CD4-positive, alpha-beta memory T cell (primary cell): ENCODE measurements at regions of chr15 and their contacts with region 1.

Region 1: DNA sequence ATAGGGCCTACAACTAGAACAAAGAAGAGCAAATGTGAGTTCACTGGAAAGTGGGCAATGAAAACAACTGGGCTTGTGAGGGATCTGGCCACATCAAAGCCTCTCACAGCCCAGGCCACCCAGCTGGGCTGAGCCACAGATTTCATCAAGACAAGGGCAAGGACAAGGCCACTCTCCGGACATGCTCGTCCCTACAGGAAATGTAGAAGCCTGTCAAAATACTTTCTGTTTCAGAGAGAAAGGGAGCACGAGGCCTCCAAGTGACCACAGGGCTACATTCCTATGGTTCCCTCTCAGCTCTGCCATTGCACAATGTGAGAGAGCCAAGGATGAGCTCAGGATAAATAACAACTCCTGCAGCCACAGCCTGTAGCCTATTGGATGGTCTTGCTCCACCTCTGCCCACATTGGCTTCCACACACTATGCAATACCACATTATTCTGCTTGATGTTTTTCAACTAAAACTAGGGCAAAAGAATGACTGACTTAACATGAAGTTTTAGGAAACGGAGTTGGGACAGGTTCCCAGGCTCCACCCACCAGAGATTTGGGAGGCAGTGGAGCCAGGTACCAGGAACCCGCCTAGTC is 12.1 kb downstream of the TBC1D2B start:
- DNase-seq: peak in 3 of 5 donors; percentile 24 to 60 (median 30)
- H3K4me3 ChIP-seq: peak overlapping the region; percentile 19 to 23
- H3K4me3 Mint-ChIP-seq: peak overlapping the region in 1 of 8 donors; percentile 79
- H3K27ac ChIP-seq: peak overlapping the region; percentile 72
- H3K27ac Mint-ChIP-seq: no peak overlapping the region
- H3K4me1 ChIP-seq: peaks cover 98% of the 10 kb centered on the region
- H3K4me1 Mint-ChIP-seq: peaks cover 3 to 67% (median 25%) of the 10 kb centered on the region in 4 donors
- H3K27me3 ChIP-seq: no peaks in the 10 kb centered on the region
- H3K27me3 Mint-ChIP-seq: no peaks in the 10 kb centered on the region

Region 2: GRCh38 chr15:78044407-78045155 is 20.8 kb before region 1 on chr15:
- CTCF ChIA-PET with region 1: interaction called, 78 read pairs
- POLR2A ChIA-PET with region 1: interaction called, 984 read pairs
- intact Hi-C with region 1: no loop called
- DNase-seq: peak in 3 of 5 donors; percentile 38 to 67 (median 50)
- H3K4me3 ChIP-seq: no peak overlapping the region
- H3K4me3 Mint-ChIP-seq: peak overlapping the region in 7 of 8 donors; percentile 57 to 90 (median 75)
- H3K27ac ChIP-seq: peak overlapping the region; percentile 42
- H3K27ac Mint-ChIP-seq: peak overlapping the region; percentile 86 to 98 (median 95)
- H3K4me1 ChIP-seq: peaks cover 100% of the 10 kb centered on the region
- H3K4me1 Mint-ChIP-seq: peaks cover 66 to 99% (median 88%) of the 10 kb centered on the region in 4 donors
- H3K27me3 ChIP-seq: no peaks in the 10 kb centered on the region
- H3K27me3 Mint-ChIP-seq: no peaks in the 10 kb centered on the region

Region 3: DNA sequence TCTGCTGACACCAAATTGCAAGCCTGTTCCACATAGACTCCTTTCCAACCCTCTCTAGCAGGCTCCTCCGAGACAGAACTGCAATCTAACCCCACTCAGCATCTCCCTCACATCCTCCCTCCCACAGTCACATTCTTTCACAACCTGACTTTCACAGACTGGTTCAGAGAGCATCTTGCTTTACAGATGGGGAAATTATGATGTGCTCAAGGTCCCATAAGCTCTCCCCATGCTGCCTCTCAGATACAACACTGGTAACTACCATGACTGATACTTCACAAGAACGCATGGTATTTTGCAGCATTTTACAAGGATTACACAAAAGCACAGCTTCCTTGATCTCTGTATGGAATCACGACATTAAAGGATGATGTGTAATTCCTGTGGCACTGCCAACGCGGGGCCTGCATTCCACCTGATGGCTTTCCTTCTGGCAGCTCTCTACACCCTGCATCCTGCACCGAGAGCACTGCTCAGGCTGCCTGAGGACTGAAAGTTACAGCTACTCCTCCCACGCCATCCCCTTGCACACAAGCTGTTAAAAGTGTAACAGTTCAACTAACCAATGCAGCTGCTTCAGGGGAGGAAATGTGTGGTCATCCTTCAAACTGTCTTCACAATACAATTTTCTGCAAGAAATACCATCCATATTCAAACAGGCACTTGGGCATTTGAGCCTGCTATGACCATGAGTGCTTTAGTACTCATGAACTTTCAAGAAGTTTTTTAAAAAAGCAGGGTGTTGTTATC is 15.5 kb before region 1 on chr15:
- CTCF ChIA-PET with region 1: interaction called, 78 read pairs
- POLR2A ChIA-PET with region 1: interaction called, 984 read pairs
- intact Hi-C with region 1: loop called (anchors 2 kb)
- DNase-seq: peak; percentile 54 to 72 (median 62)
- H3K4me3 ChIP-seq: peak overlapping the region in 1 of 2 donors; percentile 35
- H3K4me3 Mint-ChIP-seq: peak overlapping the region; percentile 63 to 86 (median 74)
- H3K27ac ChIP-seq: peak overlapping the region; percentile 68
- H3K27ac Mint-ChIP-seq: peak overlapping the region; percentile 86 to 98 (median 92)
- H3K4me1 ChIP-seq: peaks cover 100% of the 10 kb centered on the region
- H3K4me1 Mint-ChIP-seq: peaks cover 79 to 100% (median 92%) of the 10 kb centered on the region in 4 donors
- H3K27me3 ChIP-seq: no peaks in the 10 kb centered on the region
- H3K27me3 Mint-ChIP-seq: no peaks in the 10 kb centered on the region

Region 4: GRCh38 chr15:78077058-78077877 is 11.9 kb after region 1 on chr15 and contains the start of gene TBC1D2B:
- CTCF ChIA-PET with region 1: interaction called, 15 read pairs
- POLR2A ChIA-PET with region 1: interaction called, 984 read pairs
- intact Hi-C with region 1: loop called (anchors 1 kb)
- DNase-seq: peak; percentile 65 to 71 (median 68)
- H3K4me3 ChIP-seq: peak within 1 kb of the TSS; percentile 59 to 89
- H3K4me3 Mint-ChIP-seq: peak within 1 kb of the TSS; percentile 93 to 100 (median 99)
- H3K27ac ChIP-seq: peak within 1 kb of the TSS; percentile 83
- H3K27ac Mint-ChIP-seq: peak within 1 kb of the TSS; percentile 89 to 99 (median 97)
- H3K4me1 ChIP-seq: peaks cover 45% of the 10 kb centered on the region
- H3K4me1 Mint-ChIP-seq: peaks cover 31 to 61% (median 46%) of the 10 kb centered on the region in 4 donors
- H3K27me3 ChIP-seq: no peaks in the 10 kb centered on the region
- H3K27me3 Mint-ChIP-seq: no peaks in the 10 kb centered on the region
- total RNA-seq, gene TBC1D2B: 98.1 to 114 TPM